Ovary (tissue), 10 donors: ENCODE measurements at regions of chr17 and their contacts with region 1.

Region 1: GRCh38 chr17:4420692-4421131 is 13.0 kb upstream of the SPNS3 start:
- DNase-seq: peak in 2 of 5 donors; percentile 25 to 64
- H3K4me3 ChIP-seq: no peak overlapping the region
- H3K27ac ChIP-seq: no peak overlapping the region
- H3K4me1 ChIP-seq: no peaks in the 10 kb centered on the region
- H3K27me3 ChIP-seq: no peaks in the 10 kb centered on the region
- CTCF ChIP-seq: peak in 2 of 3 donors; percentile 65 to 72
- EP300 ChIP-seq: no peak
- POLR2A ChIP-seq: no peak

Region 2: DNA sequence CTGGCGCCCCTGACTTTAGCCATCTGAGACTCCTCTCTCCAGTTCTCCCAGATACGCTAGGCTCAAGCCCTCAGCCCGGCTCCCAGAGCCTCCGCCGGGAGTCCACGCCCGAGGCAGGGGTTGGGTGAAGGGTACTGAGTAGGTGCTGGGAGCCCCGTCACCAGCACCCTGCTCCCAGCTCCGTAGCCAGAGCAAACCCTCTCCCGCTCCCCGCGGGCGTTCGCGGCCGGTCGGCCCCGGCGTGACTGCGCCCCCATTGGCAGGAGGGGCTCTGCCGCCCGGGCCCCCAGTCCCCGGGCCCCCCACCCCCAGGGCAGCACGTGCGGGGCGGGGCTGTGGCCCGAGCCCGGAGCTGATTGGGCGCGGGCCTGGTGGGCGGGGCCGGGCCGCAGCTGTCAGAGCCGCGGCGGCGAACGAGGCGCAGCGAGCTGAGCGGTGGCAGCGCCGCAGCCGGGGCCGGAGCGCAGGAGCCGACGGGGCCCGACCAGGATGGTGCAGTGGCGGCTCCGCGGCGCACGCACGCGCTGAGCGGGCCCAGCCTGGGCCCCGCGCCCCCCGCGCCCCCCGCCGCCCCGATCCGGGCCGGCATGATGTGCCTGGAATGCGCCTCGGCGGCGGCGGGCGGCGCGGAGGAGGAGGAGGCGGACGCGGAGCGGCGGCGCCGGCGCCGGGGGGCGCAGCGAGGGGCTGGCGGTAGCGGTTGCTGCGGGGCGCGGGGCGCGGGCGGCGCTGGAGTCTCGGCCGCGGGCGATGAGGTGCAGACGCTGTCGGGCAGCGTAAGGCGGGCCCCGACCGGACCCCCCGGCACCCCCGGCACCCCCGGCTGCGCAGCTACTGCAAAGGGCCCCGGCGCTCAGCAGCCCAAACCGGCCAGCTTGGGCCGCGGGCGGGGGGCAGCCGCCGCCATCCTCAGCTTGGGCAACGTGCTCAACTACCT is 78.0 kb after region 1 on chr17 and contains the start of gene SPNS2:
- intact Hi-C with region 1: loop called in 1 of 4 experiments (anchors 5 kb)
- DNase-seq: peak; percentile 28 to 74 (median 47)
- H3K4me3 ChIP-seq: peak within 1 kb of the TSS; percentile 30
- H3K27ac ChIP-seq: no peak within 1 kb of the TSS
- H3K4me1 ChIP-seq: peaks cover 11% of the 10 kb centered on the region
- H3K27me3 ChIP-seq: no peaks in the 10 kb centered on the region
- CTCF ChIP-seq: no peak
- EP300 ChIP-seq: no peak
- POLR2A ChIP-seq: no peak
- total RNA-seq, gene SPNS2: 2.4 to 12.7 (median 4.2) TPM

Region 3: DNA sequence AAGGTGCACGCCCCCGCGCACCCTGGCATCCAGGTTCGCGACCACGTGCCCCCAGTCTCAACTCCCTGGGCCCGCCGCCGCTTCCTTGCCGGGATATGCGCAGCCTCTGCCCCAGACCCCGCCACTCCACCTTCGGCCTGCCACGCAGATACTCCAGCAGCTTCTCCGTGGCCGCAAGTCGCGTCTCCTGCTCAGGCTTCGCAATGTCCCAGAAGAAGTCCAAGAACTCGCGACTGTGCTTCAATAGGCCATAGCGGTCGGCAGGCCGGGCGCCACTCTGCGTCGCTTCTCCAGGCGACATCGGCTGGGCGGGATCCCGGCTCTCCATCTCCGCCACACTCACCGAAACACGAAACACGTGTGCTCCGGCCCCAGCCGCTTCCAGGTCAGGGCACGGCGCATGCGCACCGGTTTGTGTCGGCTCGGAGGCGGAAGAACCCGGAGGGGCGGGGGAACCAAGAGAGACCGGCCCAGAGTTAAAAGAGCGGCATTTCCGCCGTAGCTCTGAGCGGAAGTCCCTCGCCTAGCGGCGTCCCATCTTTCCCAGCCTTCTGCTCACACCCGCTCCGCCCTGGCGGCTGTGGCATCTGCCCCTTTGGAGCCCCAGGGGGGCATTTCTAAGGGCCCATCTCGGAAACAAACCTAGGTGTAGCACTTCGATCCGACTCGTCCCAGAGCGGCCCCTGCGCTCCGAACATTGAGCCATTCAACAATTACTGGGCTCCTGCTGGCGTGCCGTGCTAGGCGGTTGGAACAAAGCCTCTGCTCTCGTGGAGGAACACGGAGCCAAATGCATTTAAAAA is 134.5 kb after region 1 on chr17 and contains the start of gene MYBBP1A:
- intact Hi-C with region 1: loop called in 1 of 4 experiments (anchors 10 kb)
- DNase-seq: peak; percentile 95 to 98 (median 97)
- H3K4me3 ChIP-seq: peak within 1 kb of the TSS; percentile 66
- H3K27ac ChIP-seq: peak within 1 kb of the TSS; percentile 42 to 44
- H3K4me1 ChIP-seq: peaks cover 9% of the 10 kb centered on the region
- H3K27me3 ChIP-seq: no peaks in the 10 kb centered on the region
- CTCF ChIP-seq: no peak
- EP300 ChIP-seq: no peak
- POLR2A ChIP-seq: no peak
- total RNA-seq, gene MYBBP1A: 18.5 to 71.4 (median 46.4) TPM

Region 4: GRCh38 chr17:4625181-4625617 is 204.5 kb after region 1 on chr17:
- intact Hi-C with region 1: loop called in 2 of 4 experiments (anchors 5 to 10 kb)
- DNase-seq: no peak
- H3K4me3 ChIP-seq: no peak overlapping the region
- H3K27ac ChIP-seq: no peak overlapping the region
- H3K4me1 ChIP-seq: peaks cover 1% of the 10 kb centered on the region
- H3K27me3 ChIP-seq: no peaks in the 10 kb centered on the region
- CTCF ChIP-seq: no peak
- EP300 ChIP-seq: no peak
- POLR2A ChIP-seq: no peak